ENCODE measurements at regions of chr2 and their contacts with region 1.

Region 1: GRCh38 chr2:108855194-108855593 is 68.6 kb downstream of the CCDC138 start:
- DNase-seq: no peak
- H3K4me3 ChIP-seq: no peak overlapping the region
- H3K27ac ChIP-seq: no peak overlapping the region
- H3K4me1 ChIP-seq: no peaks in the 10 kb centered on the region
- H3K27me3 ChIP-seq: no peaks in the 10 kb centered on the region
- CTCF ChIP-seq: no peak

Region 2: GRCh38 chr2:108436976-108437375 is 418.2 kb before region 1 on chr2:
- intact Hi-C with region 1: no loop called
- DNase-seq: no peak
- H3K4me3 ChIP-seq: no peak overlapping the region
- H3K27ac ChIP-seq: no peak overlapping the region
- H3K4me1 ChIP-seq: no peaks in the 10 kb centered on the region
- H3K27me3 ChIP-seq: no peaks in the 10 kb centered on the region
- CTCF ChIP-seq: no peak

Region 3: DNA sequence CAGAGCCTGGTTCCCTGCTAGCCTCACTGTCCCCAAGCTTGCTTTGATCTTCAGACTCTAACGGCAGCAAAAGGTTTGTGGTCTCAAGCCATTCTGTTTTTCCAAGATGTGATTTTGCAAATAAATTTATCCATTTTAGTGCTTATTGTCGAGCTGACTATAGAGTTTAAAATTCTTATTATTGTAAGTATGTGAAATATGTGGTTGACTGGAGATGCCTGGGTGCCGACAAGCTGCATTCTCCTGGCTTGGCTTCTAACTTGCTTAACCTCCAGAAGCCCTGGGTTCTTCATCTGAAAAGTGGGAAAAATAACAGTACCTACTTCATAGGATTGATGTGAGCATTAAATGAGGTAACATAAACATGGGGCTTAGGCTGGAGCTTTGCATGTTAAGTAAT is 143.7 kb after region 1 on chr2:
- intact Hi-C with region 1: loop called (anchors 10 kb)
- DNase-seq: no peak
- H3K4me3 ChIP-seq: no peak overlapping the region
- H3K27ac ChIP-seq: no peak overlapping the region
- H3K4me1 ChIP-seq: no peaks in the 10 kb centered on the region
- H3K27me3 ChIP-seq: no peaks in the 10 kb centered on the region
- CTCF ChIP-seq: no peak

Region 4: GRCh38 chr2:109089602-109090300 is 234.6 kb after region 1 on chr2:
- intact Hi-C with region 1: no loop called
- DNase-seq: no peak
- H3K4me3 ChIP-seq: no peak overlapping the region
- H3K27ac ChIP-seq: no peak overlapping the region
- H3K4me1 ChIP-seq: no peaks in the 10 kb centered on the region
- H3K27me3 ChIP-seq: no peaks in the 10 kb centered on the region
- CTCF ChIP-seq: no peak

Region 5: DNA sequence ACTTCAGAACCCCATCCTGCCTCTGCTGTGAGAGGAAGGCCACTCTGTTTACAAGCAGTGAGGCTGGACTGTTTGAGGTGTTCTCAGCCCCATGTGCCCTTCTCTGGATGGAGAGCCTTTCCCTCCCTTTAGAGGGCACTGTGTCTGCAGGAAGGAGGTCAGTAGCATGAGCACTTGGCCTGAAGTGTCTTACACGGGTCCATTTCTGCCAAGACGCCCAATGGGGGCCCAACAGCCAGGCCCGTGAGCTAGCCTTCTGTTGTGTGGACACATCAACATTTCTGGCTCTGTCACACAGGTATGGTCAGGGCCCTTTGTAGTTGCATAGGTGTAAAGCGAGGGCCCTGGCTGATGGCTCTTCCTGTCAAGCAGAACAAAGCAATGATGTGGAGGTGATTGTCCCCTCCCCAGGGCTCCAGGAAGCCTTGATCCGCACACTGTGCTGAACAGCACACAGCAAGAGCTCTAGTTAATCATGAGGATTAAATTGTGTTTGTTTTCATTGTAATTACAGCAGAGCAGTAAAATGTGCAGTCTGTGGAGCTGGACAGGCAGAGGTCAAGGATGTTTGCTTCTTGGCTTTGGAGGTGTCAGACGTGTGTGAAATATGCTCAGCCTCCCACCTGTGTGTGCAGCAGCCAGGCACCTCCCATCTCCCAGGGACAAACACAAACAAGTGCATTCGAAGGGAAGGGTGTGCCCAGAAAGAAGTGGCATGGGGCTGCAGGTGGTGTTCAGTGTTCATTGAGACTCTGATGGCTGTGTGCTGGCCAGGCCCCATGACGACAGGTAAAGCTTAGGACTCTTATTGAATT is 405.9 kb after region 1 on chr2:
- intact Hi-C with region 1: no loop called
- DNase-seq: peak; percentile 40
- H3K4me3 ChIP-seq: no peak overlapping the region
- H3K27ac ChIP-seq: no peak overlapping the region
- H3K4me1 ChIP-seq: no peaks in the 10 kb centered on the region
- H3K27me3 ChIP-seq: no peaks in the 10 kb centered on the region
- CTCF ChIP-seq: no peak